OCI-LY7 (cell line): ENCODE measurements at regions of chr3 and their contacts with region 1.

Region 1: DNA sequence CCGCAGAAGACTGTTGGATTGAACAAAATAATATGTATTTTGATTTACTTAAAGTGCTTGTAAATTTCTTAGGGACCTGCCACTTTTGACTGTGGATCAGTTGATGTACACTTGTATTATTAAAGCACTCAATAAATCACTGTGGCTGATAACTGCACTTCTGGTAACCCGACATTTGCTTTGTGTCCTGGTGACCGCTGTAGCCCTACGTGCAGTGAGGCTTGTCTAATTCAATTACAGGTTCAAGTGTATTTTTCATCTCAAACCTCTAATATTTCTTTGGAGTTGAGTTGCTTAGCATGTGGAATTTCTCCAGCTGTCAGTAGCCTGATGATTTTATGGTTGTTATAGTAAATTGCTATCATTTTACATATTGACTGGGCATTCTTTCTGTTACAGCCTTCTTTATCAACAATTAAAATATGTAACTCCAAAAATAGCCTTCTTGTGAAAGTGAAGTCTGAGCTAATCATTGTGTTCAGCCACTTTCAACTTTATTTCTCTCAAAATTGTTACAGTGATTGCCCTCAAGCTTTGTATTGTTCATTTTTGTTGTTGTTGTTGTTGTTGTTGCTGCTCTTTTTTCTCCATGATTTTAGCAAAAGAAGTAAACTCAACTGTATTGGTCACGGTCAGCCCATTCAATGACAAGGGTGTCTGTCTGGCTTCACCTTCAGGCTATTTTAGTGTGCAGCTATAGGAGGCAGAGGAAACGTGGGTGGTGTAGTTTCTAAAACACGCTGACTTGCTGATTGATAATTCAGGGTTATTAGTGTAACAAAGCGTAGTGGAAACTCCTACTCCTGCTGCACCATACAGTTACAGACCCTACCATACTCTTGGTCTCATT is 215.1 kb upstream of the UBE2E1 start:
- DNase-seq: peak; percentile 60
- H3K4me3 ChIP-seq: peak overlapping the region; percentile 23
- H3K27ac ChIP-seq: peak overlapping the region; percentile 95
- H3K4me1 ChIP-seq: peaks cover 83% of the 10 kb centered on the region
- CTCF ChIP-seq: no peak

Region 2: GRCh38 chr3:23341147-23341838 is 249.4 kb before region 1 on chr3:
- CTCF ChIA-PET with region 1: no interaction called
- POLR2A ChIA-PET with region 1: interaction called, 3 read pairs
- intact Hi-C with region 1: loop called (anchors 5 kb)
- DNase-seq: peak; percentile 69
- H3K4me3 ChIP-seq: peak overlapping the region; percentile 47
- H3K27ac ChIP-seq: peak overlapping the region; percentile 94
- H3K4me1 ChIP-seq: peaks cover 87% of the 10 kb centered on the region
- CTCF ChIP-seq: no peak

Region 3: GRCh38 chr3:23356169-23356568 is 234.5 kb before region 1 on chr3:
- CTCF ChIA-PET with region 1: no interaction called
- POLR2A ChIA-PET with region 1: no interaction called
- intact Hi-C with region 1: no loop called
- DNase-seq: no peak
- H3K4me3 ChIP-seq: no peak overlapping the region
- H3K27ac ChIP-seq: no peak overlapping the region
- H3K4me1 ChIP-seq: peaks cover 16% of the 10 kb centered on the region
- CTCF ChIP-seq: no peak

Region 4: DNA sequence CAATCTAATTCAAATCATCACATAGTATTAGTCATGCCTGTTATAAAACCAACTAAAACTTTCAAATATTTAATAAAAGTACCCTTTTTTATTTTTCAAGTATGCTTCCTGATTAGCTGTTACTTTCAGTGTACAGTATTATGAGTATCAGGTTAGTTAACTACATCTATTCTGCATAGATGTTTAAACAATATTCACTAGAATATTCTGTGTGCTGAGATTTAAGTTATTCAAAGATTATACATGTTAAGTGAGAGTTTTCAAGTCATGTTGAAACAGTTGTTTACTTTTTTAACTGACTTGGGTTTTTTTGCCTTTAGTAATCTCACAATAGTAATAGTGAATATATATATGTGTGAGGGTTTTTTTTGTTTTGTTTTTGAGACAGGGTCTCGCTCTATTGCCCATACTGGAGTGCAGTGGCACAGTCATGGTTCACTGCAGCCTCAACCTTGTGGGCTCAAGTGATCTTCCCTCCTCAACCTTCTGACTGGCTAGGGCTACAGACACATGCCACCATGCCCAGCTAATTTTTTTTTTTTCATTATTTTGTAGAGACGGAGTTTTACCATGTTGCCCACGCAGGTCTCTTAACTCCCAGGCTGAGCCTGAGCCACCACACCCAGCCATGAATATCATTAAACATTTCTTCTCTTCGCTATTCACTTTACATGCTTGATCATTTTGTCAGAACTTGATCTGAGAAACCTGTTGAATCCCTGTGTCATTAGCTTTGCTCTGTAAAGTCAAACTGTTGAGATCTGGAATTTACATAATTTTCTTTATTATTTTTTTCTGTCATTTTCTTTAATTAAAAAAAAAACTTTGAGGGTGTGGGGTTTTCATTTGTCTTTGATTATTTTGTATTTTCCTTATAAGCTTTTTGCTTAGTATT is 71.1 kb before region 1 on chr3:
- CTCF ChIA-PET with region 1: interaction called, 3 read pairs
- POLR2A ChIA-PET with region 1: interaction called, 10 read pairs
- intact Hi-C with region 1: no loop called
- DNase-seq: peak; percentile 72
- H3K4me3 ChIP-seq: peak overlapping the region; percentile 8
- H3K27ac ChIP-seq: peak overlapping the region; percentile 47
- H3K4me1 ChIP-seq: peaks cover 63% of the 10 kb centered on the region
- CTCF ChIP-seq: no peak

Region 5: DNA sequence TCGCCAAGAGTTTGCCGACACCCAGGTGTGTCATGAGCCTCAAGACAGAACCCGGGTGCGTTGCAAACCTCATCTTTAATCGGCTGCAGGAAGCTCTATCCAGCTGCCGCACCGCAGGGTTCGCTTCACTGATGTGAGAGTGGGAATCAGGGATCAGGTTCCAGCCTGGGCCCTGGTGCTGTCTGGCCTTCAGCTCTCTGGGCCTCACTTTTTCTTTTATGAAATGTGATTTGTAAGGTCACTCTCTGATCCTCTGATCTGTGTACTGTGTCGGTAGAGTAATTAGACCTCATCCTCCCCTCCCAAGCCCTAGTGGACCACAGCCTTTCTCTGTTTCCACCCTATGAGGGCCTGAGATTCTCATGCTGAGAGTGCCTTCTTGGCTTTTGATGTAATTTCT is 12.3 kb after region 1 on chr3:
- CTCF ChIA-PET with region 1: no interaction called
- POLR2A ChIA-PET with region 1: interaction called, 14 read pairs
- intact Hi-C with region 1: no loop called
- DNase-seq: no peak
- H3K4me3 ChIP-seq: no peak overlapping the region
- H3K27ac ChIP-seq: no peak overlapping the region
- H3K4me1 ChIP-seq: no peaks in the 10 kb centered on the region
- CTCF ChIP-seq: no peak

Region 6: DNA sequence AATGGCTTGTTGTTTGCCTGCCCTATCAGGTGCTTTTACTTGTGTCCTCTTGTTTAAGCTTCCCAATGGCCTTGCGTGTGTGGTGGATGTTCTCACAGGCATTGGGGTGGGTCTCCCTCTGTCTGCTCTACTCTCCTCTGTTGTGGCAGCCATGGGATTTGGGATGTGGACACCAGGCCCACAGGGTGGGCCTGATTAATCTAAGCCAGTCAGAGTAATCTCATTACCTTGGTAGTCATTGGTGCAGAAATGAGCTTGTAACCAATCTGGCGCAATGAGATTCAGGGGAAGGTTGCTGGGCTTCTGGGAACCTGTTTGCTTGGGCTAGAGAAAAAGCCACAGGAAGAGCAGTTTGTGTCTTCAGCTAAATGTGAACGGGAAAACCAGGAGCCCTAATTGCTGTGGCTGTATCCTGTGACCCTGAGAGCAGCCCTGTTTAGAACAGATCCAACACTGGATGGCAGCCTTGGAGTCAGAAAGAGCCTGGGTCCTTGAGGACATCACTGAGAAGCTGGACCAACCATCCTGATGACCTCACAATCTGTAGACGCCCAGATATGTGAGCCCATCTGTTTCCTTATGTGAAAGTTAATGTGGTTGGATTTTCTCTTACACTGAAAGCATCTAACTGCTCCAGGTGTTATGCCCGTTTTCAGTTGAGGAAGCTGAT is 57.8 kb after region 1 on chr3:
- CTCF ChIA-PET with region 1: interaction called, 3 read pairs
- POLR2A ChIA-PET with region 1: interaction called, 12 read pairs
- intact Hi-C with region 1: loop called (anchors 1 kb)
- DNase-seq: no peak
- H3K4me3 ChIP-seq: no peak overlapping the region
- H3K27ac ChIP-seq: peak overlapping the region; percentile 49
- H3K4me1 ChIP-seq: peaks cover 39% of the 10 kb centered on the region
- CTCF ChIP-seq: 0 out of 2 replicates have a peak, but pooled peaks have one; percentile 23

Region 7: DNA sequence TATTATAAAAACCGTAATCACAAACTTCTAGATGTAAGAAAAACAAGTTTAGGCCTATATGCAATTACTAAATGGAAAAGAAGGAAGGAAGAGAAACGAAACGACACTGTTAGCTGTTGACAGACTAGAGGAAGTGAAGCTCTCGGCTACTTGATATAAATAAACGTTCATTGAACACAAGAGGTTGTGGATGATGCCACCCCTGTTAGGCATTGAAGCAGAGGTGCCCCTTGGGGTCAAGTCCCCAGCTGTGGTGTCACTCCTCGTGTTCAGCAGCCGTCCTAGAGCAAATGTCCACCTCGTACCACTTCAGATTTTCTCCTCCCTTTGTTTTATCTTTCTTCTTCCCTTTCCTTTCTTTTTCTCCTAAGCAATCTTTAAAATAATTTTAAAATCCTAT is 68.6 kb after region 1 on chr3:
- CTCF ChIA-PET with region 1: no interaction called
- POLR2A ChIA-PET with region 1: interaction called, 25 read pairs
- intact Hi-C with region 1: loop called (anchors 2 kb)
- DNase-seq: peak; percentile 96
- H3K4me3 ChIP-seq: peak overlapping the region; percentile 53
- H3K27ac ChIP-seq: peak overlapping the region; percentile 97
- H3K4me1 ChIP-seq: peaks cover 93% of the 10 kb centered on the region
- CTCF ChIP-seq: no peak

Region 8: GRCh38 chr3:23761440-23761896 is 170.8 kb after region 1 on chr3:
- CTCF ChIA-PET with region 1: no interaction called
- POLR2A ChIA-PET with region 1: interaction called, 11 read pairs
- intact Hi-C with region 1: loop called (anchors 1 kb)
- DNase-seq: peak; percentile 79
- H3K4me3 ChIP-seq: peak overlapping the region; percentile 42
- H3K27ac ChIP-seq: peak overlapping the region; percentile 92
- H3K4me1 ChIP-seq: peaks cover 66% of the 10 kb centered on the region
- CTCF ChIP-seq: peak; percentile 75